IMR-90 (cell line): ENCODE measurements at regions of chr9 and their contacts with region 1.

Region 1: GRCh38 chr9:113591001-113591898 is 127.7 kb downstream of the RGS3 start:
- DNase-seq: peak; percentile 62
- ATAC-seq: peak; percentile 31
- H3K4me3 ChIP-seq: no peak overlapping the region
- H3K27ac ChIP-seq: no peak overlapping the region
- H3K4me1 ChIP-seq: peaks cover 10% of the 10 kb centered on the region; the same call in 1 of the 2 replicates
- H3K27me3 ChIP-seq: no peaks in the 10 kb centered on the region
- CTCF ChIP-seq: peak; percentile 98
- POLR2A ChIP-seq: peak; percentile 49; the same call in 1 of the 2 replicates
- RAD21 ChIP-seq: peak; percentile 100

Region 2: DNA sequence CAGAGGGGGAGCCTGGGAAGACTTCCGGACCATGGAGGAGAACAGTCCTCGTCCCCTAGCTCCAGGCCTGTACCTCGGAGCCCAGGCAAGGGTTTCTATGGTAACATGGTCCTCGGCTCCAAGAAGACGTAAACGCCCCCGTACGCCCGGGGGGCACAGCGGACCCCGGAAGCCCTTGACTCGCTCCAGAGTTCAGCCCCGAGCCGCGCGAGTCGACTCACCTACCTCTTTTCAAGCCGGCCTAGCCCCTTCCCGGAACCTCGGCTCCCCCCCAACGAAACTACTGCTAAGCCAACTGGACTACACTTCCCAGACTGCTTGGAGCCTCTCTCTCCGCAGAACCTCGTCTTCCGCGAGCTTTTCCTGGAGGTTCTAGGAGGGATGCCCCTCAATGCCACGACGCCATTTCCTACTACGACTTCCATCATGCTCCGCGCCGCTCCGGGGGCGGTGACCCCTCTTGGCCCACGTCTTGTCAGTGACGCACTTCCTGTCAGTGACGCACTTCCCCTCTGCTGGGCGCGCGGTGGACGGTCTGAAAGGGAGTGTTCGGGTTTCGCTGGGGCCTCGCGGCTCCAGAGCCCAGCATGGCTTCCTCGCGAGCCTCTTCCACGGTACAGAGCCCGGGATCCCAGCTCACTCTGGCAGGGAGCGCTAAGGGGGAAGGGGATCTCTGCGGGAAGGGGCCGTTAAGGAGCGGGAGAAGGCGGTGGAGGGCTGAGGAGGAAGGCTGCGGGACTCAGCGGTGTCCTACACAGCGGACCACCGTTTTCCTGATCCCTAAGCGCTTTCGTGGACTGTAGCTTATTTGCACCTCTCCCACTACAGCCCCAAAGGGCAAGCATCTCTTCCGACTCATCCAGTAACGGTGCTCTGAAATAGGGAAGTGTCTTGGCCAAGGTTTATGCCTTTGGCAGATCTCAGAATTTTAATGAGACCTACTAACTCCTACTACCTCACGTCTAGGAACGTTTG is 315.8 kb before region 1 on chr9 and contains the starts of genes CDC26 and PRPF4:
- CTCF ChIA-PET with region 1: no interaction called
- POLR2A ChIA-PET with region 1: no interaction called
- dilution Hi-C with region 1: no loop called
- in situ Hi-C with region 1: no loop called
- intact Hi-C with region 1: loop called (anchors 5 kb)
- DNase-seq: peak; percentile 99
- ATAC-seq: peak; percentile 95
- H3K4me3 ChIP-seq: peak within 1 kb of the TSS; percentile 74
- H3K27ac ChIP-seq: peak within 1 kb of the TSS; percentile 88
- H3K4me1 ChIP-seq: peaks cover 2% of the 10 kb centered on the region; the same call in 1 of the 2 replicates
- H3K27me3 ChIP-seq: no peaks in the 10 kb centered on the region
- CTCF ChIP-seq: no peak
- POLR2A ChIP-seq: peak; percentile 97
- RAD21 ChIP-seq: no peak
- total RNA-seq, gene CDC26: 16.5 and 49.2 TPM in 2 replicates
- total RNA-seq, gene PRPF4: 32.5 and 38.0 TPM in 2 replicates

Region 3: DNA sequence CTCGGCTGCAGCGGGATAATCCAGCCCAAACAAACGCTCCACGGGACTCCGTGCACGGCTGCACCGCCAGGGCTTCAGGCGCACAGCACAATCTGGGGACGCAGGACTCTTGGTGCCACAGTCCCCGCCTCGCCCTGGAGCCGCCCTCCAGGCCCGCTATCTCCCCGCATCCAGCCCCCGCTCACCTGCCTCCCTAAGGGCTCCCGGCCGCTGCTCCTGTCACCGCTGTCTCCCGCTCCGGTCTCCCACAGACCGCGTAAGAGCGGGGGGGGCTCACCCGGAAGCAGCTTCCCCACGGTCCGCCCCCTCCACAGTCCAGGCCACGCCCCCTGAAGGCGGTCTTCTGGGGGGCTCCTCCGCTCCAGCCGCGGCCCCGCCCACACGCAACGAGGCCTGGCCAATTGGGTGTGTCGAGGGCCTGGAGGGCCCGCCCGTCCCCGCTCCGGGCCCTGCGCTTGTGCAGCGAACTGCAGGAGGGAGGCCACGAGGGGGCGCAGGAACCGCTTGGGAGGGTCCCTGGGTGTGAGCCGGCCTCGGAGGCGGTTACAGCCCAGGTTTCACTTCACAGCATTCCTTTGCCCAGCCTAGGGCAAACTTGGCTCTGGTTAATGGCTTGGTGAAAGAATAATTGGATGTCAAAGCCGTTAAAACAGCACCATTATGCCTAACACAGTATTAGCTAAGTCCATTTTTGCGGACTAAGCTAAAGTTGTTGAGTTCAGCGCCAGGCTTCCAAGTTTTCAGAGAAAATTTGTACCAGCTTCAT is 190.0 kb before region 1 on chr9 and contains the start of gene ALAD:
- CTCF ChIA-PET with region 1: interaction called, 3 read pairs
- POLR2A ChIA-PET with region 1: no interaction called
- dilution Hi-C with region 1: no loop called
- in situ Hi-C with region 1: no loop called
- intact Hi-C with region 1: loop called (anchors 5 kb)
- DNase-seq: peak; percentile 97
- ATAC-seq: peak; percentile 99
- H3K4me3 ChIP-seq: peak within 1 kb of the TSS; percentile 92
- H3K27ac ChIP-seq: peak within 1 kb of the TSS; percentile 45
- H3K4me1 ChIP-seq: peaks cover 8% of the 10 kb centered on the region
- H3K27me3 ChIP-seq: no peaks in the 10 kb centered on the region
- CTCF ChIP-seq: peak; percentile 98
- POLR2A ChIP-seq: no peak
- RAD21 ChIP-seq: peak; percentile 70
- total RNA-seq, gene ALAD: 10.3 and 11.1 TPM in 2 replicates

Region 4: DNA sequence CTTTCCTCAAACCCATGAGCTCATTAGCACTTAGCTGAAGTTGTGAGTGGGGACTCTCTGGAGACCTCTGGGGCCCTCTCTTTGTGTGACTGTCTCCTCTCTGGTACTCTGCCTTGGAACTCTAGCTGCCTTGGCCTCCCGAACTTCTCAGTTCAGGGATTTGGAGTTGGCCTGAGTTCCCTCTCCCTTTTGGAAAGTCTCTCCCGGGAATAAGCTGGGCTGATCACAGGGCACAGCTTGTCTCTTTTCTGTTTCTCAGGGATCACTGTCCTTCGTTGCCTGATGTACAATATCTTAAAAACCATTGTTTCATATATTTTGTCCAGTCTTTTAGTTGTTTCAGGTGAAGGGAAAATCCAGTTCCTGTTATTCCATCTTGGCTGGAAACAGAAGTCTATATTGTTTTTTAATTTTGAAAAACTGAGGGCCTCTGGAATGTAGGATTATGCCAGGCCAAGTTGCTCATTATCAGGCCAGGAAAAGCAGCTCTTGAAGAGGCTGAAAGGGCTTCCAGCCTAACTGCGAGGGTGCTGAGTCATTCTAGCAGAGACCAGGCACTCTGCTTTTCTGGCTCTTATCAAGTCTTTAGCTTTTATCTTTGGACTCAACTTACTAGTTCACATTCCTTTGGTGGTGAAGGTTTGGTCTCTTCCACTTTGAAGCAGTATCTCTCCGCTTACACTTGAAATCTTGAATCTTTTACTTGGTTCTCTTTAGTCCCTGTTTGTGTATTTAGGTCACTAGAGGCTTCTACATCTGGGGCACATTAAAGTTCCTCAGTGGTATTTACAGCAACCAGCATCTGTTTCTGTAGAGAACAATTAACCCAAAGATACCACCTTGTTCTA is 136.1 kb before region 1 on chr9:
- CTCF ChIA-PET with region 1: interaction called, 10 read pairs
- POLR2A ChIA-PET with region 1: interaction called, 5 read pairs
- dilution Hi-C with region 1: no loop called
- in situ Hi-C with region 1: no loop called
- intact Hi-C with region 1: loop called (anchors 2 kb)
- DNase-seq: peak; percentile 93
- ATAC-seq: peak; percentile 92
- H3K4me3 ChIP-seq: no peak overlapping the region
- H3K27ac ChIP-seq: peak overlapping the region; percentile 100
- H3K4me1 ChIP-seq: peaks cover 15% of the 10 kb centered on the region
- H3K27me3 ChIP-seq: no peaks in the 10 kb centered on the region
- CTCF ChIP-seq: no peak
- POLR2A ChIP-seq: 0 out of 2 replicates have a peak, but pooled peaks have one; percentile 36
- RAD21 ChIP-seq: 0 out of 2 replicates have a peak, but pooled peaks have one; percentile 11

Region 5: GRCh38 chr9:113620377-113621161 is 29.3 kb after region 1 on chr9:
- CTCF ChIA-PET with region 1: no interaction called
- POLR2A ChIA-PET with region 1: no interaction called
- dilution Hi-C with region 1: no loop called
- in situ Hi-C with region 1: no loop called
- intact Hi-C with region 1: loop called (anchors 2 kb)
- DNase-seq: peak; percentile 93
- ATAC-seq: peak; percentile 65
- H3K4me3 ChIP-seq: no peak overlapping the region
- H3K27ac ChIP-seq: peak overlapping the region; percentile 96
- H3K4me1 ChIP-seq: peaks cover 38% of the 10 kb centered on the region
- H3K27me3 ChIP-seq: no peaks in the 10 kb centered on the region
- CTCF ChIP-seq: no peak
- POLR2A ChIP-seq: 0 out of 2 replicates have a peak, but pooled peaks have one; percentile 2
- RAD21 ChIP-seq: no peak; the same call in 1 of the 2 replicates

Region 6: GRCh38 chr9:113657703-113658544 is 66.7 kb after region 1 on chr9:
- CTCF ChIA-PET with region 1: interaction called, 132 read pairs
- POLR2A ChIA-PET with region 1: interaction called, 3 read pairs
- dilution Hi-C with region 1: no loop called
- in situ Hi-C with region 1: loop called (anchors 5 kb)
- intact Hi-C with region 1: loop called (anchors 1 kb)
- DNase-seq: peak; percentile 83
- ATAC-seq: peak; percentile 98
- H3K4me3 ChIP-seq: no peak overlapping the region
- H3K27ac ChIP-seq: no peak overlapping the region
- H3K4me1 ChIP-seq: peaks cover 5% of the 10 kb centered on the region
- H3K27me3 ChIP-seq: no peaks in the 10 kb centered on the region
- CTCF ChIP-seq: peak; percentile 97
- POLR2A ChIP-seq: 0 out of 2 replicates have a peak, but pooled peaks have one; percentile 49
- RAD21 ChIP-seq: peak; percentile 99